Activated CD8-positive, alpha-beta T cell treated with anti-CD3 and anti-CD28 coated beads for 36 hours (primary cell): ENCODE measurements at regions of chr1 and their contacts with region 1.

Region 1: DNA sequence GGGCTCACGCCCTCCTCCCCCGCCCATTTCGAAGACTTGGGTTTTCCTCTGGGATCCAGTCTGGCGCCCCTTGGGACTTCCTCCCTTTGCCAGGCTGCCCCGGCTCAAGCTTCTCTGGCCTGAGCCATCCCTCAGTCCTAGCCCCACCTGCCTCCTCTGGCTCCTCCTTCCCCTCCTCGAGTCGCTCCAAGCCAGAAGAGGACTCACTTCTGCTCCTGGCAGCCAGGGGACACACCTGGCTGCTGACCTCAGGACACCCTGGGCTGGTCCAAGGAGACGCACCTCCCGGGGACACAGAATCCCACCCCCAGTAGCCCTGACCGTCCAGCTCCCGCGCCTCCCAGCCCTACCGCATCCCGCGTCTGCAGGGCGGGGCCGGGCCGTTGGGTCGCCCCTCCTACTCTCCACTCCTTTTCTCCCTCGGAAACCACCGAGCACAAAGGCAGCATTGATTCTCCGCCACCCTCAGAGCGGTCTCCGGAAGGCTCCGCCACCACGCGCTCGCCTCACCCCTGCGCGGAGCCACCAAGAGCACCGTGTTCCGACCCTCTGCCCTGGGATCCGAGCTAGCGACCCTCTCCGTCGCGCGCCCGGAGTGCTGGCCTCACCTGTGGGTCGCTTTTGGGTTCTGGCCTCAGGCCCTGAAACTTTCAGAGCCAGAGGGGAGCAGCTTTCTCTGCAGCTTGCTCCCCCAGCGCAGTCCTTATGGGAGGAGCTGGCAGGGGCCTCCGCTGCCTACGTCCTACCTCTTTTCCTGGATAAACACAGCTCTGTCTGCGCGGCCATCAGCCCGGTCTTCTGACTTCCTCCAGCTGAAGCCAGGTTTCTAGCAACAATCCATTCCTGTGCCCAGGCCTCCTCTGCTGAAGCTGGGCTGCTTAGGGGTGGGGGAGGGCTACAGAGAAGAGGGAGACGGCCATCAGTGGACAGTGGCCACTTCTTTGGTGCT is at the start of gene C2CD4D:
- DNase-seq: peak; percentile 79
- ATAC-seq: peak; percentile 69
- H3K4me3 Mint-ChIP-seq: peak within 1 kb of the TSS; percentile 80
- H3K27ac Mint-ChIP-seq: peak within 1 kb of the TSS; percentile 84
- H3K4me1 Mint-ChIP-seq: peaks cover 35% of the 10 kb centered on the region
- H3K27me3 Mint-ChIP-seq: no peaks in the 10 kb centered on the region
- CTCF ChIP-seq: no peak
- total RNA-seq, gene C2CD4D: 1.3 to 1.6 TPM

Region 2: DNA sequence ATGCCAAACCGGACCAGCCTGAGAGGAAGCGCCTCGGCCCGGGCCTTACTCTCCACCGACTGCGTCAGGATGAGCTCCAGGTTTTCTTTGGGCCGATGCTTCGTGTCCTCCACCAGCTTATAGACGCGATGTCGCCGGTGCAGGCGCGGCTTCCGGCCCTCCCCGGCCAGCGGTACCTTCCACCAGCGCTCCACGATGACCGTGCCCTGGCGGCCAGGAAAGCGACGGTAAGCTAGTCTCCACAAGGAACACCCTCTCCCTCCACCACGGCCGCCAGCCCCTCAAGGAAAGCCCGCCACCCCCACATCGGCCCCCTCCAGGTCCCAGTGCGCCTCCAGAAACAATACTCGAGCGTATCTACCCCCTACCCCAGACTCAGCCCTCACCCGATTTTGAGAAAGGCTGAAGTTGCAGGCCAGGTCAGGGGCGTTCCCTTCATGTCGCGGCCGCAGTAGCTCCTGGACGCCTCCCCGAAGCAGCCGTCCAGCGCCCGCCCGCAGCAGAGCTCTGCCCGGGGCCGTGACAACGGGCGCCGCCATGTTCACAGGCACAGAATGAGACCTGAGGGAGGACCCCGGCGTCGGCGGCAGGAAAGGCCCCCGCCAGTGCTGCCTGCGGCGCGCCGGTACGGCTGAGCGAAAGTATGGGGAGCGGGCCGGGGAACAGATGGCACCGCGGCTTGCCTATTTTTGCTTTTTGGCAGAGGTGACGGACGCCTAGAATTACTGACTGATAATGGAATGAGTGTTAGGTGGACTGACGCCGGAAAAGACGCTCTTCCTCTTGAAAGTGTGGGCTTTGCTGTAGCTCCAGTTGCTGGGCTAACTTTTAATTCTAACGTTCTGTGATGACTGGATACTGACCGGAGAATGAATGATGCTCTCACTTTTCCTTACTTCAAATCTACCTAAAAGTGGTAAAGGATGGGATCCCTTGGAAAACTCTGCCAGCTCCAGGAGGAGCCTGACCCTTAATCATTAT is 76.5 kb before region 1 on chr1 and contains the start of gene MRPL9:
- CTCF ChIA-PET with region 1: interaction called, 13 read pairs
- POLR2A ChIA-PET with region 1: interaction called, 9 read pairs
- intact Hi-C with region 1: loop called (anchors 5 kb)
- DNase-seq: peak; percentile 91
- ATAC-seq: peak; percentile 99
- H3K4me3 Mint-ChIP-seq: peak within 1 kb of the TSS; percentile 83
- H3K27ac Mint-ChIP-seq: peak within 1 kb of the TSS; percentile 95
- H3K4me1 Mint-ChIP-seq: peaks cover 18% of the 10 kb centered on the region
- H3K27me3 Mint-ChIP-seq: no peaks in the 10 kb centered on the region
- CTCF ChIP-seq: no peak
- total RNA-seq, gene MRPL9: 121 to 141 TPM

Region 3: GRCh38 chr1:151820940-151821339 is 18.8 kb before region 1 on chr1:
- CTCF ChIA-PET with region 1: interaction called, 29 read pairs
- POLR2A ChIA-PET with region 1: interaction called, 9 read pairs
- intact Hi-C with region 1: no loop called
- DNase-seq: no peak
- ATAC-seq: peak; percentile 25
- H3K4me3 Mint-ChIP-seq: no peak overlapping the region
- H3K27ac Mint-ChIP-seq: peak overlapping the region; percentile 26
- H3K4me1 Mint-ChIP-seq: peaks cover 51% of the 10 kb centered on the region
- H3K27me3 Mint-ChIP-seq: no peaks in the 10 kb centered on the region
- CTCF ChIP-seq: no peak

Region 4: GRCh38 chr1:151828965-151829698 is 10.6 kb before region 1 on chr1:
- CTCF ChIA-PET with region 1: interaction called, 29 read pairs
- POLR2A ChIA-PET with region 1: interaction called, 3 read pairs
- intact Hi-C with region 1: no loop called
- DNase-seq: peak; percentile 26
- ATAC-seq: no peak
- H3K4me3 Mint-ChIP-seq: no peak overlapping the region
- H3K27ac Mint-ChIP-seq: peak overlapping the region; percentile 31
- H3K4me1 Mint-ChIP-seq: peaks cover 67% of the 10 kb centered on the region
- H3K27me3 Mint-ChIP-seq: no peaks in the 10 kb centered on the region
- CTCF ChIP-seq: no peak

Region 5: GRCh38 chr1:151867785-151868411 is 28.2 kb after region 1 on chr1:
- CTCF ChIA-PET with region 1: no interaction called
- POLR2A ChIA-PET with region 1: no interaction called
- intact Hi-C with region 1: no loop called
- DNase-seq: peak; percentile 18
- ATAC-seq: peak; percentile 53
- H3K4me3 Mint-ChIP-seq: no peak overlapping the region
- H3K27ac Mint-ChIP-seq: no peak overlapping the region
- H3K4me1 Mint-ChIP-seq: peaks cover 9% of the 10 kb centered on the region
- H3K27me3 Mint-ChIP-seq: no peaks in the 10 kb centered on the region
- CTCF ChIP-seq: no peak